Body of pancreas (tissue), 4 donors: ENCODE measurements at regions of chr2 and their contacts with region 1.

Region 1: DNA sequence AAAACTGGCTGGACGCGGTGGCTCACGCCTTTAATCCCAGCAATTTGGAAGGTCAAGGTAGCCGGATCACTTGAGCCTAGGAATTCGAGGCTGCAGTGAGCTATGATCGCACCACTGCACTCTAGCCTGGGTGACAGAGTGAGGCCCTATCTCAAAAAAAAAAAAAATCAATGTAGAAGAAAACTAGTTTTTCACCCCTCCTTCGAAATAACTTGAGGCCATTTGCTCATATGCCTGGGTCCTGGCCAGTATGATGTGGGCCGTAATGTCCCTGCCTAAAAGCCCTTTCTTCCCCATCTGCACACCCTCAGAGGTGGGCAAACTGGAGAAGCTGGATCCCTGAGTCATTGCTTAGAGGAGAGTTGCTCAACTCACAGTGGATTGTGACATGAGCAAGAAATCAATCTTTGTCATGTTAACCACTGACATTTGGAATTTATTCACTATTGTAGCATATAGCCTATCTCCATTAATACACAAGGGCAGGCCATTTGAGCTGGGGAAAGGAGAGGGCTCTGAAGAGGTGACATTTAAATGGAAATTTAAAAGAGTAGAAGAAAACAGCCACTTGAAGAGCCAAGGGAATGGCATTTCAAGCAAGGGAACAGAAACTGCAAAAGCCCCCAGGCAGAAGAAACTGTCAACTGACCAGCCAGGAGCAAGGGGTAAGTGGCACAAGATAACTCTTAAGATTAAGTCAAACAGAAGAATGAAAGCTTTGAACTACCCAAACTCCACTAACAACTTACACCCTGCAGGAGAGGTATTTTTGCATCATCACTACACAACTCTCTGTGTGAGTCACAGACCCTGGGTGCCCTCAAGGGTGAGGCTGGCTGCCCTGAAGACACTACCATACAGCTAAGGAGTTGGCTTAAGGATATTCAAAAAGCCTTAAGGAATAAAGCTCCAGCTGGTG is 7.6 kb upstream of the METTL21A start:
- DNase-seq: no peak
- ATAC-seq: no peak
- H3K4me3 ChIP-seq: no peak overlapping the region
- H3K27ac ChIP-seq: no peak overlapping the region
- H3K4me1 ChIP-seq: no peaks in the 10 kb centered on the region
- H3K27me3 ChIP-seq: no peaks in the 10 kb centered on the region
- CTCF ChIP-seq: no peak
- POLR2A ChIP-seq: no peak

Region 2: DNA sequence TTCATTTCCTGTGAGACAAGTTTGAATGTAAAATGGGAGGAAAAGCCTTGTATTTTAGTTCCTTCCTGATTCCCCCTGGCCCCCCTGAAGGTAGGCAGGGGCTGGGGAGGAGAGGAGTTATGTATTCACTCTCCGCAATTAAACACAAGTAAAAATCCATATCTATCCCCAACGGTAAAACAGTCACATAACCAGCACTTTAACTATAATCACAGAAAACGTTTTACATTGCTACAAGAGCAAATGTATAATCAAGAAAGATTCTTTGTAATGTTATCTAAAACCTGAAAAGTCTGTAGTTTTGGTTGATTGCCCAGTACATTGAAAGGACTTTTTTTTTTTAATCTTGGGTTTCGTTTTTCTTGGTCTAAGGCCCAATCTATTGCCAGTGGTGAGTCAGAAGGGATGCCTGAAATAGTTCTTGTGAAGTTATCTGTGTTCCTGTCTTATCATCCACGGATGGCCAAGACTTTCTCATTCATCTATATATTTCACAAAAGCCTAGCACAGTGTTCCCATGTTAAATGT is 44.1 kb after region 1 on chr2:
- intact Hi-C with region 1: no loop called
- DNase-seq: peak in 1 of 4 donors; percentile 5
- ATAC-seq: peak; percentile 77
- H3K4me3 ChIP-seq: no peak overlapping the region
- H3K27ac ChIP-seq: peak overlapping the region in 3 of 4 donors; percentile 36 to 65 (median 45)
- H3K4me1 ChIP-seq: no peaks in the 10 kb centered on the region
- H3K27me3 ChIP-seq: no peaks in the 10 kb centered on the region
- CTCF ChIP-seq: no peak
- POLR2A ChIP-seq: no peak

Region 3: GRCh38 chr2:207706936-207707809 is 74.3 kb after region 1 on chr2:
- intact Hi-C with region 1: loop called (anchors 10 kb)
- DNase-seq: no peak
- ATAC-seq: no peak
- H3K4me3 ChIP-seq: no peak overlapping the region
- H3K27ac ChIP-seq: no peak overlapping the region
- H3K4me1 ChIP-seq: peaks cover 8% of the 10 kb centered on the region
- H3K27me3 ChIP-seq: no peaks in the 10 kb centered on the region
- CTCF ChIP-seq: no peak
- POLR2A ChIP-seq: no peak

Region 4: GRCh38 chr2:207770602-207771404 is 138.0 kb after region 1 on chr2:
- intact Hi-C with region 1: no loop called
- DNase-seq: no peak
- ATAC-seq: no peak
- H3K4me3 ChIP-seq: no peak overlapping the region
- H3K27ac ChIP-seq: peak overlapping the region in 3 of 4 donors; percentile 7 to 95 (median 92)
- H3K4me1 ChIP-seq: peaks cover 56% of the 10 kb centered on the region
- H3K27me3 ChIP-seq: no peaks in the 10 kb centered on the region
- CTCF ChIP-seq: no peak
- POLR2A ChIP-seq: no peak